ENCODE measurements at regions of chr22 and their contacts with region 1.

Region 1: DNA sequence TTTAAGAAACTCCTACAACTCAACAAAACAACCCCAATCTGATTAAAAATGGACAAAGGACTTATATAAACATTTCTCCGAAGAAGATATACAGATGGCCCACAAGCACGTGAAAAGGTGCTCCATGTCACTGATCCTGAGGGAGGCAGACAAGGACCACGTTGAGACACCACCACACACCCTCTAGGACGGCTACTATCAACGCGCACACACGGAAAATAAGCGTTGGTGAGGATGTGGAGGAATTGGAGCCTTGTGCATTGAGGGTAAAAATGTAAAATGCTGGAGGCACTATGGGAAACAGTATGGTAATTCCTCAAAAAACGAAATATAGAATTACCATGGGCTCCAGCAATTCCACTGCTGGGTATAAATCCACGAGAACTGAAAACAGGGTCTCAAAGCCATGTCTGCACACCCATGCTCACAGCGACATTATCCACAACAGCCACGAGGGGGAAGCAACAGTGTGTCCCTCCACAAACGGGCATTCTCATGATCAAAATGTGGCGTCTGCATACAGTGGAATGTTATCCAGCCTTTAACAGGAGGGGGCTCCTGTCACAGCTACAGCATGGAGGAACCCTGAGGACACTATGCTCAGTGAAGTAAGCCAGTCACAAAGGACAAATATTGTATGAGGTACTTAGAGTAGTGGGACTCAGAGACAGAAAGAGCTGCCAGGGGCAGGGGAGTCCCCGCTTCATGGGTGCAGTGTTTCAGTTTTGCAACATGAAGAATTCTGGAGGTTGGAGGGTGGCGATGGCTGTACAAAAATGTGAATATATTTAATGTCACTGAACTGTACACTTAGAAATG is 22.5 kb downstream of the YPEL1 start:
- DNase-seq: peak; percentile 66
- ATAC-seq: peak; percentile 91 to 94

Region 2: DNA sequence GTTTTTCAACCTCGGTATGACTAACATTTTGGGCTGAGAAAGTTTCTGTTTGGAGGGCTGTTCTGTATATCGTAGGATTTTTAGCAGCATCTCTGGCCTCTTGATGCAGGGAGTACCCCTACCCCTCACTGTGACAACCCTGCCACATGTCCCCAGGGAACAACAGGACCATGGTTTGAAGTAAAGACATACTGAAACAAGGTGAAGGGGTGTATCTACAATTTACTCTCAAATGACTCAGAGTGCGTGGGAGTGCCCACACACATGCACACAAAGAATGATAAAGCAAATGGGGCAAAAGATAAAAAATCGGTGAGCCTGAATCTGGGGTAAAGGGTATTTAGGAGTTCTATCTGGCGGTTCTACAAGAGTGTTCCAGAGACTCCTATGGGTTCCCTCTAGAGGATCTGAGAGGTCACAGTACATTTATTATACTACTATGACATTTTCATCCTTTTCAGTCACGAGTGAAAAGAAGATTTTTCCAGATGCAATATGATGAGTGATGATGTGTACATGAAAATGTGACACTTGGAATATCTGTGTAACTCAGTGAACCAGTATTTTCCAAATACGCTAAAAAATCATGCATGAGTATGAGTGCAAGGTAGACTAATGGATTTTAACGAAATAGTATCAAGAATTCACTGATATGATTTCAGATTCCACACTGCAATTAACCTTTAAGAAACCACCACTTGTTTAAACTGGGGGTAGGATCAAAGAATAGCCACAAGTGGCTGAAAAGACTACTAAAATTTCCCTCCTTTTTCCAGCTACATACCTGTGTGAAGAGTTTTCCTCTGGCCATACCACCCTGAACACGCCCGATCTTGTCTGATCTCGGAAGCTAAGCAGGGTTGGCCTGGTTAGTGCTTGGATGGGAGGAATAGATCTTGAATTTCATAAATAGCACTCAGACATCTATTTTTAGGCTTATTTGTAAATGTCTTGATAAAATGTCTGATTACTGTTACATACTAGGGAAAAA is 78.8 kb after region 1 on chr22:
- intact Hi-C with region 1: no loop called
- DNase-seq: no peak
- ATAC-seq: peak in 1 of 2 donors; percentile 31

Region 3: DNA sequence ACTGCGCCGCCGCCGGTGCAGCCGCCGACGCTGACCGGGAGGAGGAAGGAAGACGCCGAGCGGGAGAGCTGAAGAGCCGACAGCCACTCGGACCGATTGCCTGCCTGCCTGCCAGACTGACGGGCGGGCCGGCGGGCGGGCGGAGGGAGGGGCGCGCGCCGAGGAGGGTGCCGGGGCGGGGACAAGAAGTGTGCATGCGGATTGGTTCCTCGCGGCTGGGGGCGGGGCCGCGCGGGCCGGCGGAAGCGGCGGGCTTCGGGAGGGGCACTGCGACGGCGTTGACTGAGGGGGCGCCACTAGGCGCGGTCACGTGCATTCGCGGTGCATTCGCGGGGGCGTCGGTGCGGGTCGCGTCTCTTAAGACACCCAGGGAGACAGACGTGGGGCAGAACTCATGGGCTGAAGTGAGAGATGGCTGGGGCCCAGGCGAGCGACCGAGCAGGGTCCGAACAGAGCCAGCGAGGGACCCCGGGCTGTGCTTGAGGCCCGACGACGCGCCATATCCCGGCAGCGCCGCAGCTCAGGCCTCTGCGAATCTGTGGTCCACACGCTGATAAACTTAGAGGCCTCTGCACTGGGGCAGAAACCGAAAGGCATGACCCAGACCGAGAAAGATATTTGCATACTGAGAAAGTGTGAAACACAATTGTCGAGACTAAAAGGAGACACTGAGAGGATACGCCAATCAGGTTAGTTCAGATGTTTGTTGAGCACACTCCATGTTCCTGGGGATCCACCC is 154.6 kb after region 1 on chr22 and contains the start of gene MAPK1:
- intact Hi-C with region 1: loop called in 1 of 2 experiments (anchors 10 kb)
- DNase-seq: peak; percentile 95
- ATAC-seq: peak; percentile 99
- total RNA-seq, gene MAPK1: 98.3 to 104 TPM

Region 4: GRCh38 chr22:21927174-21927823 is 214.2 kb after region 1 on chr22:
- intact Hi-C with region 1: no loop called
- DNase-seq: no peak
- ATAC-seq: no peak